Posterior vena cava (tissue), 2 donors: ENCODE measurements at regions of chr10 and their contacts with region 1.

Region 1: GRCh38 chr10:51301644-51302043 is 227.4 kb downstream of the PRKG1 start:
- DNase-seq: no peak

Region 2: GRCh38 chr10:50653142-50653541 is 648.5 kb before region 1 on chr10:
- intact Hi-C with region 1: no loop called
- DNase-seq: no peak

Region 3: GRCh38 chr10:51368939-51369338 is 67.3 kb after region 1 on chr10:
- intact Hi-C with region 1: loop called in 1 of 2 experiments (anchors 10 kb)
- DNase-seq: no peak